ENCODE measurements at regions of chrX and their contacts with region 1.

Region 1: DNA sequence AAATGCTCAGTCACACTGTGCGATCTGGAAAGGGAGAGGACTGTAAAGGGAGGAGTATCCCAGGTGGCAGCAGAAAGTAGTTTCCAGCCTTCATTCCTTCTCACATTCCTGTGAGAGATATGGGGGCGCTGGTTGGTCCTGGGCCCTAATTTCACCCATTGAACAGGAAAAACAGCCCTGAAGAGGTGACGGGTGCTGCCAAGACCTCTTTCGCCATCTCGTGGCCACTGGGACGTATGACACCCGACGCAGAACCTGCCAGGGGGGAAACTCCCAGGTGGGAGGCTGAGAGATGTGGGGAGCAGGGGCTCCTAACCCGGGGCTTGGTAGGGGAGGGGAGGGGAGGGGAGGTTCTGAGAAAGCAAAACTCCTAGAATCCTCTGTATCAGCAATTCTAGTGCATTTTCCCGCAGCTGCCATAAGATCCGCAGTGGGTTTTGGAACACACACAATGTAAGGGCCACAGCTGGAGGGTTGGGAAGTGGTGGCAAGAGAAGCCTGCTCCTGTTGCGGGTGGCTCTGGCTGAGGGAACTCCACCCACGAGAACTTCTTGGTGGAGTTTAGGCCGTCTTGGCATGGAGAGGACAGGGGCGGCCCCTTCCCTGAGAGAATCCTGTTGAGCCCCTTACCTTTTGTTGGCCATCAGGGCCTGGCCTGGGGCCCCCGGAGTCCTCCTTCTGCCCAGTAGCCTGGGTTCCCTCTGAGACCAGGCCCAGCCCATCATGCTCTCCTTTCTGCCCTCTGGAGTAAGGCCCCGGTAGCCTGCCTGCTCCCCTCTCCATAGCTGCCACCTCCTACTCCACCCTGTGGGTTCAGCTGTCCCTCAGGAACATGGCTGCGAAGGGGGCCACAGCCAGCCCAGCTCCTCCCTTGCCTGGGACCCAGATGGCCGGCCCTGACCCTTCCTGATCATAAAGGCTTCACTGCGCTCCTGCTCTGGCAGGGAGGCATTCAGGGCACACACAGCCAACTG is 134.1 kb downstream of the OR13H1 start:
- DNase-seq: peak; percentile 45 to 46
- H3K4me3 ChIP-seq: no peak overlapping the region
- H3K27ac ChIP-seq: no peak overlapping the region
- H3K4me1 ChIP-seq: no peaks in the 10 kb centered on the region
- H3K27me3 ChIP-seq: no peaks in the 10 kb centered on the region
- CTCF ChIP-seq: peak; percentile 85

Region 2: GRCh38 chrX:130975947-130976346 is 702.0 kb before region 1 on chrX:
- CTCF ChIA-PET with region 1: no interaction called
- POLR2A ChIA-PET with region 1: no interaction called
- intact Hi-C with region 1: loop called (anchors 1 kb)
- DNase-seq: peak; percentile 23 to 47
- H3K4me3 ChIP-seq: no peak overlapping the region
- H3K27ac ChIP-seq: no peak overlapping the region
- H3K4me1 ChIP-seq: no peaks in the 10 kb centered on the region
- H3K27me3 ChIP-seq: peaks cover 11% of the 10 kb centered on the region
- CTCF ChIP-seq: peak; percentile 80

Region 3: DNA sequence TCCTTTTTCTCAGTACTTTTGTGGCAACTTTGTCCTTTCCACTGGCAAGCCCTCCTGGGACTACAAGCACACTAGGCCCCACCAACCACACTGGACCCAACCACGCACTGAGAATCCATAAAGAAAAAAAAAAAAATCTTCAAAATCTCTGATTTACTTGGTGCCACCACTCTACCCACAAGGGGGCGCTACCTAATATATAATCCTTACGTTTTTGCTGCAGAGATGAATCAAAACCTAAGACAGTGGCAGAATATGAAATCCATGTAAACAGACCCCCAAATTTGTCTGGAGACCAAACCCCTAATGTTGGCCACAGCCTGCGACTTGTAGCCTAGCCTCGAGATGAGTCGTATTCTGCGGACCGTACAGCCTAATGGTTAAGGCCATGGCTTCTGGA is 683.3 kb before region 1 on chrX:
- CTCF ChIA-PET with region 1: no interaction called
- POLR2A ChIA-PET with region 1: no interaction called
- intact Hi-C with region 1: loop called (anchors 5 kb)
- DNase-seq: peak in 1 of 2 experiments; percentile 8
- H3K4me3 ChIP-seq: no peak overlapping the region
- H3K27ac ChIP-seq: no peak overlapping the region
- H3K4me1 ChIP-seq: no peaks in the 10 kb centered on the region
- H3K27me3 ChIP-seq: peaks cover 17% of the 10 kb centered on the region
- CTCF ChIP-seq: peak; percentile 77